ENCODE measurements at regions of chr10 and their contacts with region 1.

Region 1: DNA sequence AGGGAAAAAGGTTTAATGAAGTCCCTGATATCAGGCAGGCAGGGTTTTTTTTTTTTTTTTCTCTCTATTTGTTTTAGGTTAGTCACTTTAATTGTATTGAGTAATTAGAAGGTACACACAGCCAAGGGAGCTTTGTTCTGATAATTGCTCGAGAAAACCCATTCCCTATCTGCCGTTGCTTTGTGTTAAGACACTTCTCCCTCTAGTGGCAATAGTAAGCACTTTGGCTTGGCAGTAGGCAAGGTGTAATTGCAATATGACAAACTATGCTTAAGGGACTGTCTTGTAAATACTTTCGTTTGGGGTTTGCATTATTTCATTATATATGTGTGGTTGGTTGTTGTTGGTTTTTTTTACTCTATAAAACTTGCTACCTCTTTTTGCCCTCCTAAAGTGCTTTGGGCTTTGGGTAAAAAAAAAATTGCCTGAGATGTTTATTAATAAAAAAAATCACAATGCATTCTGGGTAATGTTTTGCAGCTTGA is 113.4 kb downstream of the BTRC start:
- DNase-seq: peak; percentile 26
- H3K4me3 Mint-ChIP-seq: no peak overlapping the region
- H3K27ac Mint-ChIP-seq: no peak overlapping the region
- H3K4me1 Mint-ChIP-seq: peaks cover 4% of the 10 kb centered on the region
- H3K27me3 Mint-ChIP-seq: no peaks in the 10 kb centered on the region

Region 2: GRCh38 chr10:100934084-100934659 is 533.2 kb before region 1 on chr10:
- CTCF ChIA-PET with region 1: no interaction called
- POLR2A ChIA-PET with region 1: no interaction called
- DNase-seq: no peak
- H3K4me3 Mint-ChIP-seq: no peak overlapping the region
- H3K27ac Mint-ChIP-seq: no peak overlapping the region
- H3K4me1 Mint-ChIP-seq: no peaks in the 10 kb centered on the region
- H3K27me3 Mint-ChIP-seq: no peaks in the 10 kb centered on the region

Region 3: GRCh38 chr10:101301249-101301711 is 166.0 kb before region 1 on chr10:
- CTCF ChIA-PET with region 1: interaction called, 15 read pairs
- POLR2A ChIA-PET with region 1: no interaction called
- DNase-seq: peak; percentile 52
- H3K4me3 Mint-ChIP-seq: no peak overlapping the region
- H3K27ac Mint-ChIP-seq: no peak overlapping the region
- H3K4me1 Mint-ChIP-seq: no peaks in the 10 kb centered on the region
- H3K27me3 Mint-ChIP-seq: peaks cover 40% of the 10 kb centered on the region

Region 4: DNA sequence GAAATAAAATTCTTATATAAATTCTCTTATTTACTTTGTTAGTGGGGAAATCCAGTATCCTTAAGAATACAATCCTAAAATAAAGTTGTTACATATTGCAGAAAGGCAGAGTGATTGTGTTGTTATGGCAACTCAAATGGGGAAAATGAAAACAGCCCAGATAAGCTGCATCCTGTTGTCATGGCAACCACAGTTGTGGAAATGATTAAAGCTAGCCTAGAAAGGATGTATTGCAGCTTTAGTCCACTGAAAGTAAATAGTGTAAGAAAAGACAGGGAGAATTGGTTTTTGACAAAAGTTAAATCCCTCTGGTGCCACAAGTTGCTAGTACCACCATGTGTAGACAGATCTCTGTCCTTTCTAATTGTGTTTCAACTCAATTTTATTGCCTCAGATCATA is 70.2 kb before region 1 on chr10:
- CTCF ChIA-PET with region 1: no interaction called
- POLR2A ChIA-PET with region 1: no interaction called
- DNase-seq: peak; percentile 20
- H3K4me3 Mint-ChIP-seq: no peak overlapping the region
- H3K27ac Mint-ChIP-seq: no peak overlapping the region
- H3K4me1 Mint-ChIP-seq: no peaks in the 10 kb centered on the region
- H3K27me3 Mint-ChIP-seq: no peaks in the 10 kb centered on the region

Region 5: GRCh38 chr10:101441541-101442455 is 25.5 kb before region 1 on chr10:
- CTCF ChIA-PET with region 1: interaction called, 17 read pairs
- POLR2A ChIA-PET with region 1: no interaction called
- DNase-seq: no peak
- H3K4me3 Mint-ChIP-seq: no peak overlapping the region
- H3K27ac Mint-ChIP-seq: no peak overlapping the region
- H3K4me1 Mint-ChIP-seq: peaks cover 7% of the 10 kb centered on the region
- H3K27me3 Mint-ChIP-seq: no peaks in the 10 kb centered on the region

Region 6: DNA sequence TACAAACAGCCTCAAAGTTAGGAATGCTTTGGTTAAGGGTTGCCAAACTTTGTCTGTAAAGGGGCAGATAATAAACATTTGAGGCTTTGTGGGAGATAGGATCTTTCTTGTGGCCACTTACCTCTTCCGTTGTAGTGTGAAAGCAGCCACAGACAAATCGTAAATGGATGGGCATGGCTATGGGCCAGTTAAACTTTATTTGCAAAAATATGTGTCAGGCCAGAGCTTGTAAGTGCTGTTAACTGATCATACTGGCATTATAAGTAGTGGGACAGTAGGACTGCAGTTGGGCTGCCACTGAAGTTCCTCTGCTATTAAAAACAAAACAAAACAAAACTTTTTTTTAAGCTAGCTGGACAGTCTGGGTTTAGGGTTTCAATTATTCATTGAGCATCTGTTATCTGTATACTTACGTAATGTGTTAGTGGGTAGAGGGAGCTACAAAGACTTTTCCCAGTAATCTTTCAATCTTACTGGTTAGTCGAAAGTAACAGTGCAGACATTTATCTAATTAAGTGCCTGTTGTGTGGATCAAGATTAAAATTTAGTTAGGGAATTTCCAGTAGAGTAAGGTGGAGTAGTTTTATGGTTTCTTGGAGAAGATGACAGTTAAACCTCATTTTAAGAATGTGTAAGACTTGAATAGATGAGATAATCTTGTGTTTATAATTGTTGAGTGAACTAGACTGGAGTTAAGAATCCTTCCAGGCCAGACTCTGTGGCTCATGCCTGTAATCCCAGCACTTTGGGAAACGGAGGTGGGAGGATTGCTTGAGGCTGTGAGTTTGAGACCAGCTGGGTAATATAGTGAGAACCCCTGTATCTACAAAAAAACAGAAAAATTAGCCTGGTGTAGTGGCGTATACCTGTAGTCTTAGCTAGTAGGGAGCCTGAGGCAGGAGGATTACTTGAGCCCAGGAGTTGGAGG is 13.3 kb before region 1 on chr10:
- CTCF ChIA-PET with region 1: interaction called, 46 read pairs
- POLR2A ChIA-PET with region 1: interaction called, 3 read pairs
- DNase-seq: no peak
- H3K4me3 Mint-ChIP-seq: peak overlapping the region; percentile 0
- H3K27ac Mint-ChIP-seq: peak overlapping the region; percentile 26
- H3K4me1 Mint-ChIP-seq: peaks cover 22% of the 10 kb centered on the region
- H3K27me3 Mint-ChIP-seq: peaks cover 26% of the 10 kb centered on the region

Region 7: DNA sequence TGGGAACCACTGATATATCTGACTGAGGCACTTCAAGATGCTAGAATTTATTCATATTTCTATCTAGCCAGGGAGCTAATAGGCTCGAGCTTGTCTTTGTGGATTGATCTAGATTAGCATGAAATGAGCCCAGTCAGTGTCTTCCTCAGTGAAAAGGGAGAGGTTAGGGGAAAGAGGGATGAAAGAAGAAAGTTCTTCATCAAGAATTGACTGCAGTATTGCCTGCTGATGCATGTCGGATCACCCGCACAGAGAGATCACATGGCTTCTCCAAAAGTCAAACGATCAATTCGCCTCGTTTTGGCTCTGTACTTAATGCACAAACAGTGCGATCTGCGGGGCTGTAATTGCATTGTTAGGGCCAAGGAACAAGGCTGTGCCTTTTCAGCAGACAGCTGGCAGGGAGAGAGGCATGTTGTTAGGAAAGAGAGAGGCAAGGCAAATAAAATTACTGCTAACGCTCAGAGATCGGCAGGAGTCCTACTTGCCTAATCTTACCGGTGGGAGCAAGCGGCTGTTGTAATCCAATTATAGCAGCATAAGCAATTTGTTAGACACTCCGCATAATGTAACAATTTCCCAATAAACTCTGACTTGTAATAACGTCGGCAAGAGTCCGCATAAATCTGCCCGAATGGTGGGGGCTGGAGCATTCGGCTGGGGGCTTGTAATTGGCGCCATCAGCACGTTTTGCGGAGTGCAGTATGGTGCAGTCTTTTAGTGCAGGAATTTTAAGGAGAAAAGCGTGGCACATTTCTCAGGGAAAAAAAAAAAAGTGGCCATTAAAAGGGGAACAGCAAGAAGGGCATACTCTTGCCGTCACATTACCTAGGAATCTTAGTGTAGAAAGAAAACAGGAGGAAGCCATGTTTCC is 18.6 kb after region 1 on chr10:
- CTCF ChIA-PET with region 1: interaction called, 15 read pairs
- POLR2A ChIA-PET with region 1: interaction called, 3 read pairs
- DNase-seq: no peak
- H3K4me3 Mint-ChIP-seq: no peak overlapping the region
- H3K27ac Mint-ChIP-seq: no peak overlapping the region
- H3K4me1 Mint-ChIP-seq: peaks cover 2% of the 10 kb centered on the region
- H3K27me3 Mint-ChIP-seq: peaks cover 2% of the 10 kb centered on the region

Measured in activated CD4-positive, alpha-beta memory T cell treated with anti-CD3 and anti-CD28 coated beads, Interleukin-2, amount 10 ng/mL, durations not matched to agents 7 days and 5 days (primary cell).